ENCODE measurements at regions of chr16 and their contacts with region 1.

Region 1: GRCh38 chr16:71484006-71484893 is 4.9 kb downstream of the ZNF19 start:
- DNase-seq: peak; percentile 92
- ATAC-seq: peak; percentile 96
- H3K4me3 ChIP-seq: peak overlapping the region; percentile 63 to 85
- H3K27ac ChIP-seq: peak overlapping the region; percentile 70 to 98
- H3K4me1 ChIP-seq: no peaks in the 10 kb centered on the region
- H3K27me3 ChIP-seq: no peaks in the 10 kb centered on the region

Region 2: DNA sequence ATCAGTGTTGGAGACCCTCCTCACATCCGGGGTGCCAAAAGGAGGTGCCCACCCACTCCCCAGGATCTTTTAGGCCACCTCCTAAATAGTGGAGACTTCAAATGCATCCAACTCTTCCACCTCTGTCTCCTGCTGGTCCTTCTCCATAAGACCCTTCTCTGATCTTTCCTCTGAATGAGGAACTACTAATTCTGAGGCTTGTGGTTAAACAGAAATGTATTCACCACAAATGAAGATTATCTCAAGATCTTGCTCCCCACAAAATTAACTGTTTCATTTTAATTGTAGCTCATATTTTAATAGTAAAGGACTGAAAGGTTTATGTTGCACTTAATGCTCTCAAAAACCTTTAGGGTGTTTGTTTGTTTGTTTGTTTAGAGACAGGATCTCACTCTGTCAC is 76.5 kb before region 1 on chr16:
- intact Hi-C with region 1: no loop called
- DNase-seq: no peak
- ATAC-seq: no peak
- H3K4me3 ChIP-seq: no peak overlapping the region
- H3K27ac ChIP-seq: no peak overlapping the region
- H3K4me1 ChIP-seq: no peaks in the 10 kb centered on the region
- H3K27me3 ChIP-seq: no peaks in the 10 kb centered on the region

Region 3: GRCh38 chr16:71461686-71462648 is 22.3 kb before region 1 on chr16 and contains the start of gene ZNF23:
- intact Hi-C with region 1: loop called (anchors 1 kb)
- DNase-seq: peak; percentile 91 to 95
- ATAC-seq: peak; percentile 98
- H3K4me3 ChIP-seq: peak within 1 kb of the TSS; percentile 69 to 89
- H3K27ac ChIP-seq: peak within 1 kb of the TSS in 1 of 2 donors; percentile 30
- H3K4me1 ChIP-seq: no peaks in the 10 kb centered on the region
- H3K27me3 ChIP-seq: no peaks in the 10 kb centered on the region
- total RNA-seq, gene ZNF23: 10.0 to 11.7 TPM

Measured in aorta (tissue), 5 donors.